MCF 10A (cell line): ENCODE measurements at regions of chr7 and their contacts with region 1.

Region 1: GRCh38 chr7:30564243-30564892 is 30.3 kb upstream of the GARS1 start:
- DNase-seq: peak; percentile 91
- H3K4me3 Mint-ChIP-seq: no peak overlapping the region
- H3K27ac Mint-ChIP-seq: peak overlapping the region; percentile 64
- H3K4me1 Mint-ChIP-seq: peaks cover 9% of the 10 kb centered on the region
- H3K27me3 Mint-ChIP-seq: no peaks in the 10 kb centered on the region
- CTCF ChIP-seq: peak; percentile 95

Region 2: GRCh38 chr7:29988424-29989256 is 575.7 kb before region 1 on chr7:
- CTCF ChIA-PET with region 1: no interaction called
- POLR2A ChIA-PET with region 1: no interaction called
- intact Hi-C with region 1: no loop called
- DNase-seq: peak; percentile 35
- H3K4me3 Mint-ChIP-seq: peak overlapping the region; percentile 64
- H3K27ac Mint-ChIP-seq: peak overlapping the region; percentile 89
- H3K4me1 Mint-ChIP-seq: peaks cover 22% of the 10 kb centered on the region
- H3K27me3 Mint-ChIP-seq: no peaks in the 10 kb centered on the region
- CTCF ChIP-seq: no peak

Region 3: DNA sequence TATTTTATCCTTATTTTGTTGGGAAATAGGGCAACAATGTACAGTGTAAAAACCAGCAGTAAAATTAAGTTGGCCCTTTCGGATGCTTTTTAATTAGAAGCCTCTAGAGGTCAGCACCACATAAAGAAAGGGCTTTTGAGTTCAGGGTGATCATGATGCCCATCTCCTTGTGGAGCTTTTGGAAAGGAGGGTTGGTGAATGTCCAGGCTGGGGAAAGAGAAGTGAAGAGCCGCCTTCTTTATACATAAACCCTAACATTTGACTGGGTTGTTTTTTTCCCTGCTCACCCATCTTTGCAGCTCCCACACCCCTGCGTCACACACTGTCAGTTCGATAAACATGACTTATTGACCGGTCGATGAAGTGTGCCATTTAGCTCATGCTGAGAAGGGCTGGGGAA is 399.8 kb before region 1 on chr7:
- CTCF ChIA-PET with region 1: interaction called, 6 read pairs
- POLR2A ChIA-PET with region 1: interaction called, 4 read pairs
- intact Hi-C with region 1: loop called (anchors 1 kb)
- DNase-seq: peak; percentile 82
- H3K4me3 Mint-ChIP-seq: no peak overlapping the region
- H3K27ac Mint-ChIP-seq: peak overlapping the region; percentile 92
- H3K4me1 Mint-ChIP-seq: peaks cover 42% of the 10 kb centered on the region
- H3K27me3 Mint-ChIP-seq: no peaks in the 10 kb centered on the region
- CTCF ChIP-seq: peak; percentile 63

Region 4: DNA sequence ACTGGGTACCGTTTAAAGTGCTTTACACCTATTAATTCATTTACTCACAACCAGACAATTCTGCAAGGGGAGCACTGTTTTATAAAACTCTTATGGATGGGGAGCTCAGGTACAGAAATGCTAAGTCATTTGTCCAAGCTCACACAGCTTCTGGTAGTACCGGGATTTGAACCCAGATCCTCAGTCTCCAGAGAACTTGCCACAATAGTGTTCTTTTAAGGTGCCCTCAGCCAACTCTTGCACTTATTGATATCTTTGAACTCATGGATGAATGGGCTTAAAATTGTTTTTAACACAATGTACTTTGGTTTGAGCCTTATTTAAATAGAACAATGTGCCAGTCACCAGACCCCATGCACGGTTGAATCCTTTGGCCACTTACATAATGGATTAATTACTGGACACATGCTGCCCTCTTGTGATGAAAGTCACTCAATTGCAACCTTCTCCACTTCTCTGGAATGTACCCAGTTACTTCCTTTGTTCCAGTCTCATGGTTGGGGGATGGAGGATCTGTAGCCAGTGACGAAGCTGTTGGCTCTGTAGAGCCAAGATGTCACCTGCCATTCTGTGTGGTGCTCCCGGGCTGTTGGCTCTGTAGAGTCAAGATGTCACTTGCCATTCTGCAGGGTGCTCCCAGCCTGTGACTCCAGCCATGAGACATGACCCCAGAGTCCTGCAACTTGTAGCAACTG is 151.4 kb before region 1 on chr7:
- CTCF ChIA-PET with region 1: interaction called, 3 read pairs
- POLR2A ChIA-PET with region 1: interaction called, 3 read pairs
- intact Hi-C with region 1: loop called (anchors 5 kb)
- DNase-seq: peak; percentile 90
- H3K4me3 Mint-ChIP-seq: no peak overlapping the region
- H3K27ac Mint-ChIP-seq: no peak overlapping the region
- H3K4me1 Mint-ChIP-seq: peaks cover 10% of the 10 kb centered on the region
- H3K27me3 Mint-ChIP-seq: no peaks in the 10 kb centered on the region
- CTCF ChIP-seq: peak; percentile 54

Region 5: DNA sequence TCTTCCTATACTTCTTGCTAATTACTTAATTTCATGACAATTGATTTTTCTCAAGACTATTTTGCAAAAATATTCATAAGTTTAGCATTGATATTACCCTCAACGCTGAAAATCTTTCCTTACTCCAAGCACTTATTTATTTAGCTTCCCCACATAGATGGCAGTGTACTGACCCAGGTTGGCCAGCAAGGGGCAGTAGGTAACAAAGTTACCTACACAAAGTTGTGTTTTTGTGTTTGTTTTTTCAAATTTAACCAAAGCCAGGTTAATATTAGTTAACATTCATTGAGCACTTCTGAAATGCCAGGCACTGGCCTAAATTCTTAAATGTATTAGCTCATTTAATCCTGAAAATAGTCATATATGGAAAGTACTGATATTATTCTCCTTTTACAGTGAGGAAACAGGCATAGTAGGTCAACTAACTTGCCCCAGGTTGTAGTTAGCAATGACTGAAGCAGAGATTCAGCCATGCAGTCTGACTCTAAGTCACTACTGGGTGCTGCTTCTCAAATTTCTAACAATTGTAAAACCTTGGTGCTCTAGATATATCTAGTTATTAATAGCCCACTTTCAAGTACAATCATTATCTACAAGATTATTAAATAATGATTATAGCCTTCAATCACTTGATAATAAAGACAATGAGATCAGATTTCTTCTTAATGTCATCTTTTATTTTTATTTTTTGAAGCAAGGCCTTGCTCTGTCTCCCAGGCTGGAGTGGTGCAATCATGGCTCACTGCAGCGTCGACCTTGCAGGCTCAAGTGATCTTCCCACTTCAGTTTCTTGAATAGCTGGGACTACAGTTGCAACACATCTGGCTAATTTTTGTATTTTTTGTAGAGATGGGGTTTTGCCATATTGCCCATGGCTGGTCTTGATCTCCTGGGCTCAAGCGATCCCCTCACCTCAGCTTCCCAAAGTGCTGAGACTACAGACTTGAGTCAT is 54.0 kb before region 1 on chr7:
- CTCF ChIA-PET with region 1: interaction called, 150 read pairs
- POLR2A ChIA-PET with region 1: interaction called, 6 read pairs
- intact Hi-C with region 1: loop called (anchors 1 kb)
- DNase-seq: peak; percentile 58
- H3K4me3 Mint-ChIP-seq: no peak overlapping the region
- H3K27ac Mint-ChIP-seq: no peak overlapping the region
- H3K4me1 Mint-ChIP-seq: no peaks in the 10 kb centered on the region
- H3K27me3 Mint-ChIP-seq: no peaks in the 10 kb centered on the region
- CTCF ChIP-seq: peak; percentile 86

Region 6: DNA sequence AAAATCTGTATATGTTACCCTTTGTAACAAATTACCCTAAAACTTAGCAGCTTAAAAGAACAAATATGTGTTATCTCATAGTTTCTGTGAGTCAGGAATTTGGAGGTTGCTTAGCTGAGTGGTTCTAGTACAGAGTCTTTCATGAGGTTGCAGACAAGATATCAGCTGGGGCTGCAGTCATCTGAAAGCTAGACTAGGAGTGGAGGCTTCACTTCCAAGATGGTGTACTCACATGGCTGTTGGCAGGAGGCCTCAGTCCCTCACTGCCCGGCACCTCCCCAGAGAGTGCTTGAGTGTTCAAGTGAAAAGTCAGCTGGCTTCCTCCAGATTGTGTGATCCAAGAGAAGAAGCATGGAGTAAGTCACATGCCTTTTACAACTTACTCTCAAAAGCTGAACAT is 42.8 kb before region 1 on chr7:
- CTCF ChIA-PET with region 1: interaction called, 13 read pairs
- POLR2A ChIA-PET with region 1: no interaction called
- intact Hi-C with region 1: no loop called
- DNase-seq: no peak
- H3K4me3 Mint-ChIP-seq: no peak overlapping the region
- H3K27ac Mint-ChIP-seq: no peak overlapping the region
- H3K4me1 Mint-ChIP-seq: peaks cover 12% of the 10 kb centered on the region
- H3K27me3 Mint-ChIP-seq: no peaks in the 10 kb centered on the region
- CTCF ChIP-seq: no peak

Region 7: GRCh38 chr7:30548762-30549344 is 15.5 kb before region 1 on chr7:
- CTCF ChIA-PET with region 1: interaction called, 434 read pairs
- POLR2A ChIA-PET with region 1: interaction called, 90 read pairs
- intact Hi-C with region 1: loop called (anchors 1 kb)
- DNase-seq: peak; percentile 84
- H3K4me3 Mint-ChIP-seq: no peak overlapping the region
- H3K27ac Mint-ChIP-seq: peak overlapping the region; percentile 92
- H3K4me1 Mint-ChIP-seq: peaks cover 32% of the 10 kb centered on the region
- H3K27me3 Mint-ChIP-seq: no peaks in the 10 kb centered on the region
- CTCF ChIP-seq: peak; percentile 78

Region 8: GRCh38 chr7:30604901-30605300 is 40.5 kb after region 1 on chr7:
- CTCF ChIA-PET with region 1: interaction called, 11 read pairs
- POLR2A ChIA-PET with region 1: interaction called, 3 read pairs
- intact Hi-C with region 1: no loop called
- DNase-seq: no peak
- H3K4me3 Mint-ChIP-seq: no peak overlapping the region
- H3K27ac Mint-ChIP-seq: peak overlapping the region; percentile 21
- H3K4me1 Mint-ChIP-seq: peaks cover 12% of the 10 kb centered on the region
- H3K27me3 Mint-ChIP-seq: no peaks in the 10 kb centered on the region
- CTCF ChIP-seq: no peak

Region 9: DNA sequence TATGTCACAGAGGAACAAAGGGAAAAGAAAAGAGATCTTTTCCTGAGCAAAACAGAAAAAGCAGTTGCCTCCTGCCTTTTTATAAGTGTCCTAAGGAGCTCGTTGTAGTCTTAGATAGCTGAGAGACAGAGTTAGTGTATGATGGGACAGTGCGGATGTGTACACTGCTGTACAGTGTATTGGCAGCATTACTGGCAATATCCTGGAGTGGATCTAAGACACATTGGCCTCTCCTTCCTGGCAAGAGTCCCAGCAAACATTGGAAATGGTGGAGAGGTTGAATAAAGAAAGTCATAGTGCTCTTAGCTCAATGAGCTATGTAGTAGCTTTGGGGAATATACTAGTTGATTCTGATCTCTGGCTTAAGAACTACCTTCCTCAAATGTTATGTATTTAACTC is 53.0 kb after region 1 on chr7:
- CTCF ChIA-PET with region 1: no interaction called
- POLR2A ChIA-PET with region 1: no interaction called
- intact Hi-C with region 1: no loop called
- DNase-seq: no peak
- H3K4me3 Mint-ChIP-seq: no peak overlapping the region
- H3K27ac Mint-ChIP-seq: no peak overlapping the region
- H3K4me1 Mint-ChIP-seq: peaks cover 9% of the 10 kb centered on the region
- H3K27me3 Mint-ChIP-seq: no peaks in the 10 kb centered on the region
- CTCF ChIP-seq: no peak

Region 10: DNA sequence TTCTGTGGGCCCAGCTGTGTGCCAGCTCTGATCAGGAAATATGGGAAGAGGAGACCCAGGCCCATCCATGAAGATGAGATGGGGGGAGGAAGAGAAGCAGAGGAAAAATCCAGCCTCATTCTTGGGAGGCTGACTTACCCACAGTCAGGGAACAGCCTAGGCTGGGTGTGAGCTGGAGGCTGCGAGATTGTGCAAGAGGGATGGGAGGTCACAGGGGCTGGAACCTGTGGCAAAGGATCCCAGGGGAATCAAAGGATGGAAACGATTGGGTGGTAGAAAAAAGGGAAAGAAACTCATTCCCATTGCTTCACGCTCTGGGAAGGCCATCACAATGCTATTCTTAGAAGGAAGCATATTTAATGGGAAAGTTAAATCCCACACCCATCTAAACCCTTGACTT is 144.6 kb after region 1 on chr7:
- CTCF ChIA-PET with region 1: no interaction called
- POLR2A ChIA-PET with region 1: no interaction called
- intact Hi-C with region 1: no loop called
- DNase-seq: peak; percentile 47
- H3K4me3 Mint-ChIP-seq: no peak overlapping the region
- H3K27ac Mint-ChIP-seq: no peak overlapping the region
- H3K4me1 Mint-ChIP-seq: no peaks in the 10 kb centered on the region
- H3K27me3 Mint-ChIP-seq: peaks cover 18% of the 10 kb centered on the region
- CTCF ChIP-seq: no peak